Activated CD8-positive, alpha-beta T cell treated with anti-CD3 and anti-CD28 coated beads, Interleukin-2, amount 10 ng/mL, durations not matched to agents 7 days and 5 days (primary cell): ENCODE measurements at regions of chr11 and their contacts with region 1.

Region 1: GRCh38 chr11:67630228-67630942 is 648 bp upstream of the NUDT8 start:
- DNase-seq: peak; percentile 99
- ATAC-seq: peak; percentile 71
- H3K4me3 Mint-ChIP-seq: peak overlapping the region; percentile 81
- H3K27ac Mint-ChIP-seq: peak overlapping the region; percentile 94
- H3K4me1 Mint-ChIP-seq: peaks cover 25% of the 10 kb centered on the region
- H3K27me3 Mint-ChIP-seq: no peaks in the 10 kb centered on the region

Region 2: DNA sequence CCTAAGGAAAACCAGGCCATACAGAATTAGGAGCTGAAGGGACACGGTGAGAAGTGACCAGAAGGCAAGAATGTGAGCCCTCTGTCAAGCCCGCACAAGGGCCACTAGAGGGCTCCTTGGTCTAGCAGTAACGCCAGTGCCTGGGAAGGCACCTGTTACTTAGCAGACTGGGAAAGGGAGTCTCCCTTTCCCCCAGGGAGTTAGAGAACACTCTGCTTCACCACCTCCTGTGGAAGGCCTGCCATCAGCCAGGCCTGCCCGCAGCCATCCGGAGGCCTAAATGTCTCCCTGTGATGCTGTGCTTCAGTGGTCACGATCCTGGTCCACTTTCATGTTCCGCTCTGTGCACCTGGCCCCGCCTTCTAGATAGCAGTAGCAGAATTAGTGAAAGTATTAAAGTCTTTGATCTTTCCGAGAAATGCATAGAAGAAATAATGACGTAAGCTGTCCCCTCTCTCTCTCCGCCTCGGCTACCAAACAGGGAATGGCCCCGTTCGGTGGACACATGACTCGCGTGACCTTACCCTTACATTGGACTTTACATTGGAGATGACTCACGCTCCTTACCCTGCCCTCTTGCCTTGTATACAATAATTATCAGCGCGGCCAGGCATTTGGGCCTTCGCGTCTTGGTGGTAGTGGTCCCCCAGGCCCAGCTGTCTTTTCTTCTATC is 57.5 kb before region 1 on chr11:
- CTCF ChIA-PET with region 1: interaction called, 20 read pairs
- POLR2A ChIA-PET with region 1: no interaction called
- DNase-seq: peak; percentile 51
- ATAC-seq: no peak
- H3K4me3 Mint-ChIP-seq: no peak overlapping the region
- H3K27ac Mint-ChIP-seq: no peak overlapping the region
- H3K4me1 Mint-ChIP-seq: no peaks in the 10 kb centered on the region
- H3K27me3 Mint-ChIP-seq: peaks cover 14% of the 10 kb centered on the region

Region 3: GRCh38 chr11:67613960-67614715 is 16.2 kb before region 1 on chr11:
- CTCF ChIA-PET with region 1: interaction called, 90 read pairs
- POLR2A ChIA-PET with region 1: interaction called, 12 read pairs
- DNase-seq: peak; percentile 90
- ATAC-seq: peak; percentile 90
- H3K4me3 Mint-ChIP-seq: peak overlapping the region; percentile 78
- H3K27ac Mint-ChIP-seq: peak overlapping the region; percentile 98
- H3K4me1 Mint-ChIP-seq: peaks cover 50% of the 10 kb centered on the region
- H3K27me3 Mint-ChIP-seq: no peaks in the 10 kb centered on the region

Region 4: DNA sequence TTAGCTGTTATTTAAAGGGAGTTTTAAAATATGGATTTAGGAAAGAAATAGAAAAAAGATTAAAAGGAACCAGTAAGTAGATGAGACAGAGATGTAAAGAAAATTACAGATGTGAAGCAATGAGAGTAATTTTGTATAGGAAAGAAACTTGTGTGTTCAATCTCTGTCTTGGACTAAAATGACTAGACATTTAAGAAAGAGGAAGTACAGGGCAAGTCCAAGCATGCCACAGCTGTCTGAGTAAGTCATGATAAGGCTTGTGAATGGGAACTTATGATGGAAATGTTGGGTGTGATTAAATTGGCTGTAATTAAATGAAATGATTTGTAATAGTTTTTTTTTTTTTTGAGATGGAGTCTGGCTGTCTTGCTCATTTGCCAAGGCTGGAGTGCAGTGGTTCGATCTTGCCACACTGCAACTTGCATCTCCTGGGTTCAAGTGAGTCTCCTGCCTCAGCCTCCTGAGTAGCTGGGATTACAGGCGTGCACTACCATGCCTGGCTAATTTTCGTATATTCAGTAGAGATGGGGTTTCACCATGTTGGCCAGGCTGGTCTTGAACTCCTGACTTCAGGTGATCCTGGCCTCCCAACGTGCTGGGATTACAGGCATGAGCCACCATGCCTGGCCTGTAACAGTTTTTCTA is 26.0 kb after region 1 on chr11:
- CTCF ChIA-PET with region 1: interaction called, 63 read pairs
- POLR2A ChIA-PET with region 1: interaction called, 3 read pairs
- DNase-seq: no peak
- ATAC-seq: no peak
- H3K4me3 Mint-ChIP-seq: no peak overlapping the region
- H3K27ac Mint-ChIP-seq: no peak overlapping the region
- H3K4me1 Mint-ChIP-seq: peaks cover 8% of the 10 kb centered on the region
- H3K27me3 Mint-ChIP-seq: no peaks in the 10 kb centered on the region

Region 5: DNA sequence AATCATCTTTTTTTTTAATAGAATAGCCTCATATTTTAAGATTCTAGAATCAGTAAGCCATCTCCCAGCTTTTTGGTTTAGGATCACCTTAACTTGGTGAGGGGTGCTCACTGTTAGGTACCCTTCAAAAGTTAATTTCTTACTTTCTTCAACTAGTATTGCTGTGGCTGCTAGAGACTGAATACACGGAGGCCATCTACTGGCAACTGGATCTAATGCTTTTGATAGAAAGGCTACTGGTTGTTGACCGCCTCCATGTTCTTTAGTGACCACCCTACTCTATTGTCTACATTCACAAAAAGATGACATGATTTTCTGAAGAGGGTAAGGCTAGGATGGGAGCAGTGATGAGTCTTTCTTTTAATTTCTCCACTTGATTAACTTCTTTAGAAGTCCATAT is 60.8 kb after region 1 on chr11:
- CTCF ChIA-PET with region 1: interaction called, 21 read pairs
- POLR2A ChIA-PET with region 1: interaction called, 3 read pairs
- DNase-seq: no peak
- ATAC-seq: no peak
- H3K4me3 Mint-ChIP-seq: no peak overlapping the region
- H3K27ac Mint-ChIP-seq: no peak overlapping the region
- H3K4me1 Mint-ChIP-seq: peaks cover 11% of the 10 kb centered on the region
- H3K27me3 Mint-ChIP-seq: peaks cover 18% of the 10 kb centered on the region